ENCODE measurements at regions of chr6 and their contacts with region 1.

Region 1: DNA sequence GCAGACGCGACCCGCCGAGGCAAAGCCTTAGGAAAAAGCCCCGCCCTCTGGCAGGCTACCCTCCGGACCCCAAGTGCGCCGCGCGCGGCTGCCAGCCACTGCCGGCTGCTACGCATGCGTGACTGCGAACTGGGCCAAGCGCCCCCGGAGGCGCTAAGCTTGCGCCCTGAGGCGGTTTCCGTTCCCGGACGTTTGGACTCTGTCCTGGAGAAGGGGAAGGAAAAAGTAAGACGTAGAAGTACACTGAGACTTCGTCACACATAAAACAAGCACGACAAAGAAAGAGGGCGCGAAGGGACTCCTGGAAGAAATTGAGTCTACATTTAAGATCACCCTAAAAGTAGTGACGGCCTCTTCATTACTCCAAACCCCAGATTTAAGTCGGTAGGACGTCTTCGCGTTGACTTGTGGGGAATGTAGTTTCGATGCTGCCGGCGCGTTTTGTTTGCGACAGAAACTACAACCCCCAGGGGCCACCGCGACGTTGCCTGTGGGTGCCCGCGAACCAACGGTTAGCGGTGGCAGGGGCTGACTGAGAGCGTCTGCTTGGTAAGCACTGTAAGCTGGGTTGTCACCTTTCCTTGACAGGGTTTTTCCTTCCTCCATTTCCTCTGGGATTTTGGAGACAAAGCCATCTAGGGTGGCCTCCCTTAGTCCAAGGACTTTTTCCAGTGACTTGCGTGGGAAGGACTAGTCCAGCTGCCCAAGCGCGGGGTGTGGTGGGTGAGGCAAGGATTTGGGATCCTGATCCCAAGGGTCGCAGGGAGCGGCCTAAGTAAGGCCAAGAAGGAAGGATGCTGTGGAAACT is at the start of gene CEP57L1:
- DNase-seq: peak; percentile 91
- H3K4me3 Mint-ChIP-seq: peak within 1 kb of the TSS; percentile 95
- H3K27ac Mint-ChIP-seq: peak within 1 kb of the TSS; percentile 97
- H3K4me1 Mint-ChIP-seq: peaks cover 54% of the 10 kb centered on the region
- H3K27me3 Mint-ChIP-seq: no peaks in the 10 kb centered on the region
- total RNA-seq, gene CEP57L1: 13.5 and 16.3 TPM in 2 replicates

Region 2: GRCh38 chr6:107459283-107460082 is 1635.7 kb before region 1 on chr6 and contains the start of gene PDSS2:
- intact Hi-C with region 1: loop called (anchors 5 kb)
- DNase-seq: peak; percentile 95
- H3K4me3 Mint-ChIP-seq: peak within 1 kb of the TSS; percentile 93
- H3K27ac Mint-ChIP-seq: peak within 1 kb of the TSS; percentile 91
- H3K4me1 Mint-ChIP-seq: peaks cover 16% of the 10 kb centered on the region
- H3K27me3 Mint-ChIP-seq: no peaks in the 10 kb centered on the region
- total RNA-seq, gene PDSS2: 11.8 and 14.5 TPM in 2 replicates

Region 3: DNA sequence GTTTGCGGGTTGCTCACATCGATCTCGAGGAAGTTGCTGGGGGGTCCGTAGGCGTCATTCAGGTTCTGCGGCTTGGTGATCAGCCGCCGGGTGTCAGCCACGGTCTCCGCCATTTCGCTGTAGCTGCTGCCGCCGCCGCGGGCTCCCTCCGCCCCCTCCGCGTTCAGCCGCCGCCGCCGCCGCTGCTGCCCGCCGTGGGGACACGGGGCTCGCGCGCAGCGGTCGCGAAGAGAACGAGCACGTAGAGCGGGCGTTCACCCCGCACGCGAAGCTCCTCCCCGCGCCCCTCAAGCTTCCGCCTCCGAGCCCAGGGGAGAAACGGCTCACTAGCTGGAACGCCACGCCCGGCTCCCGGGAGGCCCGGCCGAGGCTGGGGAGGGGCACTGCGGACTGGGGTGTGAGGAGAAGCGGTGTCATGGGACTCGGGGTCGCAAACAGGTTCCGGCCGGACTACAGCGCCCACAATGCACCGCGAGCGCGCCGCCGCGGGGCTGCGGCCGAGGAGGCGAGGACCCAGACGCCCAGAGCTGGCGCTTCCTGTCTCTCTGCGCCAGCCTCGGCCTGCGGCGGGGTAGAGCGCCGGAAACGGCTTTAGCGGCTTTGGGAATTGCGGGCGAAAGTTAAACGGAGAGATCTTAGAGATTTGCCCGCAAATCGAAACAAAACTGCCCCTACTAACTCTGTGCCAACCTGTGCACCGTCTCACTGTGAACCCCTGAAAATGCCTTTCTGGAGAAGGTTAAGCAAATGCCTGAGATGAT is 834.2 kb before region 1 on chr6 and contains the start of gene SNX3:
- intact Hi-C with region 1: loop called (anchors 1 kb)
- DNase-seq: peak; percentile 88
- H3K4me3 Mint-ChIP-seq: peak within 1 kb of the TSS; percentile 90
- H3K27ac Mint-ChIP-seq: peak within 1 kb of the TSS; percentile 93
- H3K4me1 Mint-ChIP-seq: peaks cover 12% of the 10 kb centered on the region
- H3K27me3 Mint-ChIP-seq: peaks cover 6% of the 10 kb centered on the region
- total RNA-seq, gene SNX3: 68.5 and 72.5 TPM in 2 replicates

Region 4: DNA sequence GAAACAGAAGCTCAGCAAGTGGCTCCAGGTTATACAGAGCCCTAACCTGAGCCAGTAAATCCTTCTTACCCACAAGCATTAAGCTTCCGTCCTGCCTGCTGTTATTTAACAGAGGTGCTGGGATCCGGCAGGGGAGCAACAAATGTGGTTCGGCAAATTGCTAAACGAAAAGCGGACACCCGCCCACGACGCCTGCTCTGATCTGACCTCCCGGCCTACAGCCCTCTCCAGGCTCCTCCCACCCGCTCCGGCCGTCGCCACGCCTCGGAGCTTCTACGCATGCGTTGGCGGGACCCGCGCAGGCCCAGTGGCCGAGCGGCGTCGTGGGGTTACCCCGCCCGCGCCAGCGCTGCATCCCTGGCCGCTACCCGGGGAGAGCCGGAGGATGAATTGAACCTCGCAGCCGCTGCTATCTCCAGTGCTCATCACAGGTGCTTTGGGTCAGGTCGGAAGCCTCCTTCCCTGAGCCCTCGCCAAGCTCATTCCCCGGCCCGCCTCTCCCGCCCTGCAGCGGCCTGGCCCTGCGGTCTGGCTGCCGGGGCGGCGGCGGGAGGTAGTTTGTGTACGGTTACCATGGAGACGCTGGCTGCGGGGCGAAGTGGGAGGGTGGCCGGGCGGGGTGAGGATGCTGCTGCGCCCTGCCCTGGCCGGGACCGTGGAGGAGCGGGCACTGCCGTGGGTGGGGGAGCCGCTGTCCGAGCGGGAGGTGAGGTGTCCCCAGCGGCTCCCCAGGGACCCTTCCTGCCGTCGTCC is 246.9 kb before region 1 on chr6 and contains the start of gene ARMC2:
- intact Hi-C with region 1: loop called (anchors 1 kb)
- DNase-seq: peak; percentile 88
- H3K4me3 Mint-ChIP-seq: peak within 1 kb of the TSS; percentile 89
- H3K27ac Mint-ChIP-seq: peak within 1 kb of the TSS; percentile 71
- H3K4me1 Mint-ChIP-seq: peaks cover 31% of the 10 kb centered on the region
- H3K27me3 Mint-ChIP-seq: peaks cover 25% of the 10 kb centered on the region
- total RNA-seq, gene ARMC2: 3.9 and 4.6 TPM in 2 replicates

Region 5: GRCh38 chr6:109174911-109175310 is 79.7 kb after region 1 on chr6:
- intact Hi-C with region 1: no loop called
- DNase-seq: no peak
- H3K4me3 Mint-ChIP-seq: no peak overlapping the region
- H3K27ac Mint-ChIP-seq: no peak overlapping the region
- H3K4me1 Mint-ChIP-seq: no peaks in the 10 kb centered on the region
- H3K27me3 Mint-ChIP-seq: peaks cover 13% of the 10 kb centered on the region

Region 6: GRCh38 chr6:109282756-109283155 is 187.5 kb after region 1 on chr6:
- intact Hi-C with region 1: no loop called
- DNase-seq: no peak
- H3K4me3 Mint-ChIP-seq: no peak overlapping the region
- H3K27ac Mint-ChIP-seq: no peak overlapping the region
- H3K4me1 Mint-ChIP-seq: no peaks in the 10 kb centered on the region
- H3K27me3 Mint-ChIP-seq: peaks cover 4% of the 10 kb centered on the region

Region 7: DNA sequence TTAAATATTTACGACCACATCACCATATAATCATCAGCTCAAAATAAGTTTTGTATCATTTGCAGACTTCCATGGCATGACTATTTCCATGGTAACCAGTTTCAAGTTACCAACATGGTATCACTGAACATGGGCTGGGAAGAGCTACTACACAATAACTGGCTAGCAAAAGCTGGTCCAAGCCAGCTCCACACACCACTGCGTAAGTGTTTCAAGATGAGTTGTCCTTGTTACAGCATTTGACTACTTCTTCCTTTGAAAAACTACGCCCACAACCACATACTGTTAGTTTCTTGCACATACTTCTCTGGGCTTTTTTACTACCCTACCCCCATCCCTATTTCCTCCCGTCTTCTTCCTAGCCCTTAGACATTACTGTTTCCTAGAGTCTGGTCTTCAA is 278.5 kb after region 1 on chr6:
- intact Hi-C with region 1: loop called (anchors 2 kb)
- DNase-seq: peak; percentile 46
- H3K4me3 Mint-ChIP-seq: peak overlapping the region; percentile 81
- H3K27ac Mint-ChIP-seq: peak overlapping the region; percentile 92
- H3K4me1 Mint-ChIP-seq: peaks cover 75% of the 10 kb centered on the region
- H3K27me3 Mint-ChIP-seq: no peaks in the 10 kb centered on the region

Region 8: DNA sequence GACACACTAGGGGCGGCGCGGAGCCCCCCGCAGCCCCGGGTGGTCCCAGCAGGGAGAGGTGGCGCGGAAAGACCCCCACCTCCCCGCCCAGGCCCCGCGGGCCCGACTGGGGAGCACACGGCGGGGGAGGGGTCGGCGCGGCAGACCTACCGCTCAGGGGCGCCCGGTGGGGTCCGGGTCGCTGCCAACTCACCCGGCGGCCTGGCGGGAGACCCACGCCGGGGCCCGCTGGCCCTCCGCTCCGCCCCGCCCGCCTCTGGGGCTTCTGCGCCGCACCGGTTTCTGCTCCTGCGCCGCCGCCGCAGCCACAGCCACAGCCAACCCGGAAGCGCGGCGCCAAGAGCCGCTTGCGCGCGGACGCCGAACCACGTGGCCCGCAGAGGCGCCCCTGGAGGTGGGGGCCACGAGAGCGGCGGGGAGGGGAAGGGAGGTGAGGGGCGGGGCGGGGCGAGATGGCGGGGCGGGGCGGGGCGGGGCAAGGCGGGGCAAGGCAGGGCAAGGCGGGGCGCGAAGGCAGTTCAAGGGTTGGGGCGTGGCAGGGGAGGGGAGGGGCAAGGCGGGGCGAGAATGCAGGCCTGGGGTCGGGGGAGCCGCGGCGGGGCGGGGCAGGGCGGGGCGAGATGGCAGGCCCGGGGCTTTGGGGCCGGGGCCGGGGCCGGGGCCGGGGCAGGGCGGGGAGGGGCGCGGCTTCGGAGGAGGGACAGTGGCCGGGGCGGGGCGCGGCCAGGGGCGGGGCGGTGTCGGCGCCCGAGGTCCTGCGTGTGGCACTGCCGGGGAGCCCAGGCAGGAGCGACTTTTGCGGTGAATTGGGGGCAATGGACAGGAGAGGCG is 387.9 kb after region 1 on chr6 and contains the start of gene ZBTB24:
- intact Hi-C with region 1: loop called (anchors 1 kb)
- DNase-seq: peak; percentile 87
- H3K4me3 Mint-ChIP-seq: peak within 1 kb of the TSS; percentile 98
- H3K27ac Mint-ChIP-seq: peak within 1 kb of the TSS; percentile 92
- H3K4me1 Mint-ChIP-seq: peaks cover 47% of the 10 kb centered on the region
- H3K27me3 Mint-ChIP-seq: peaks cover 1% of the 10 kb centered on the region
- total RNA-seq, gene ZBTB24: 19.5 and 20.8 TPM in 2 replicates